ENCODE measurements at regions of chr18 and their contacts with region 1.

Region 1: GRCh38 chr18:24190590-24190989 is 51.7 kb downstream of the CABYR start:
- DNase-seq: no peak
- ATAC-seq: no peak
- H3K4me3 Mint-ChIP-seq: no peak overlapping the region
- H3K27ac Mint-ChIP-seq: no peak overlapping the region
- H3K4me1 Mint-ChIP-seq: no peaks in the 10 kb centered on the region
- H3K27me3 Mint-ChIP-seq: peaks cover 28% of the 10 kb centered on the region

Region 2: DNA sequence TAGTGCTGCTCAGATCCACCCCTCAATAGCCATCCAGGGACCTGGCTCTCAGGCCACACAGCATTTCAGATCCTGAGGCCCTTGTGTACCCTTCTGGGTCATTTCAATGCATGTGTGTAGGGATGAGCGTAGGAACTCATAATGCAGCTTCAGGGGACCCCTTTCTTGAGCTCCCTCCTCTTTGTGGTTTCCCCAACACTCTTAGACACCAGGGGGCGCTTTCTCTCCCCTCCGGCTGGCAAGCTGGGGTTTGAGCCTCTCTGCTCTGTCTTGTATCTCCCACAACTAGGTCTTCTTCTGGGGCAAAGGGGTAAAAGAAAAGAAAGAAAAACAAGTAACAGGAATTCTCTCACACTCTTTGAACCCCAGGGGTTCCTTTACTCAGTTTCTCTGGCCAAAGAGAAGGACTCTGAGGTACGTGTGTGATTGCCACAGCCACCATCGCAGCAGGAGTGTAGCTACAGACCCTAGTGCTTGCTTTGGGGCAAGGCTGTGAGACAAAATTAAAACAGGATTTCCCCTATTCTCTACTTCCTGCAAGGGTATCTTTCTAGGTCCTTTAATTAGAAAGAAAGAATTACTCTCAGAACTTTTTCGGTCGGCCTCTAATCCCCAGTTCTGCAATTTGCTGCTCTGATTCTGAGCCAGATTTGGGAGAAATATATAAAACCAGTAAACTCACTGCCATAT is 13.7 kb before region 1 on chr18:
- CTCF ChIA-PET with region 1: interaction called, 16 read pairs
- POLR2A ChIA-PET with region 1: no interaction called
- DNase-seq: peak; percentile 58
- ATAC-seq: peak; percentile 30
- H3K4me3 Mint-ChIP-seq: no peak overlapping the region
- H3K27ac Mint-ChIP-seq: no peak overlapping the region
- H3K4me1 Mint-ChIP-seq: no peaks in the 10 kb centered on the region
- H3K27me3 Mint-ChIP-seq: peaks cover 7% of the 10 kb centered on the region

Region 3: DNA sequence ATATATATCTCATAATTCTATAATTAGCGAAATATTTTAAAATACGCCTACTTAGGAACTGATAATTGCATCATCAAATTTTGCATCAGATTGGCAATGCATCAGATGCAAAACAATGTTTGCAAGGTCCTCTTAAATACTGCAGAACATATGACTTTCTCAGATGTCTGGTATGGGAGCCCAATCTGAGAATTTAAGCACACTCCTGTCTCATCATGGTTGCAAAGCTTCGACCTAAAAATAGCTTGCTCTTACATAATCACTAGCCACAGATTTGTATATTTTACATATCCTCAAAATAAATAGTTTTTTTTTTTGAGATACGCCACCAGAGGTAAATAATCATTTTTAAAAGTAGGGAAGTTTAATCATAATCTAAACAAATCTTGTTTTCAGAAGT is 71.5 kb after region 1 on chr18:
- CTCF ChIA-PET with region 1: no interaction called
- POLR2A ChIA-PET with region 1: no interaction called
- DNase-seq: no peak
- ATAC-seq: no peak
- H3K4me3 Mint-ChIP-seq: no peak overlapping the region
- H3K27ac Mint-ChIP-seq: no peak overlapping the region
- H3K4me1 Mint-ChIP-seq: no peaks in the 10 kb centered on the region
- H3K27me3 Mint-ChIP-seq: peaks cover 13% of the 10 kb centered on the region

Region 4: GRCh38 chr18:24293254-24293653 is 102.7 kb after region 1 on chr18:
- CTCF ChIA-PET with region 1: no interaction called
- POLR2A ChIA-PET with region 1: no interaction called
- DNase-seq: no peak
- ATAC-seq: no peak
- H3K4me3 Mint-ChIP-seq: no peak overlapping the region
- H3K27ac Mint-ChIP-seq: no peak overlapping the region
- H3K4me1 Mint-ChIP-seq: no peaks in the 10 kb centered on the region
- H3K27me3 Mint-ChIP-seq: peaks cover 2% of the 10 kb centered on the region